A673 (cell line): ENCODE measurements at regions of chrX and their contacts with region 1.

Region 1: DNA sequence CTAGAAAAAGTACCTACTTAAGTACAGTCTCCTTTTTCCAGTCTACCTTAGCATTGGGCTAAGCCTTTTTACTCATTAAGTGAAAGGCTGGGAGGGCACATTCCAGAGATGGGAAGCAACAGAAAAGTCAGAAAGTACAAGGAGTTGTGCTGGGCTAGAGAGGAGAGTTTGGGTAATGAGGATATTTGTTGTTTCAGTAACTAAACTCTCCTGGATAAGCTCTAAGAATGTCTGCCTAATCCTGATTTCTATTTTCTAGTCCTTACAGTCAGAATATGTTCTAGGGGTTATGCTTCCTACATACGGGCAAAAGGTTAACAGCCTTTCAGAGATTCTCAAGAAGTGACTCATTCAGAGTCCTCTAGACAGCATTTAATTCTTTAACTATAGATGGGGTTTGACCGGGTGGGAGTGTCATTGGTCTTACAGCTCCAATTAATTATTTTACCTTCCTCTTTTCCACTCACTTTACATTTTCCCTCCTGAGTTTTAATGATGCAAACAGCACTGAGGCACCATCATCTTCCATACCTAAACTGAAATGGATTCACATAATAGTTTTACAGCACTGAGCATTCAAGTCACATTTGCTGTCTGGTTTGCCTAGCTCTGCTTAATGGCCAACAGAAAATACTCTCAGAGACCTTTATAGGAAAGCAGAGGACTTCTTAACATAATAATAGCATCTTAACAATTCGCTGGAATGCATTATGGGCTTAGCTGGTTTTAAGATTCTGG is 42.9 kb downstream of the USP26 start:
- DNase-seq: no peak
- H3K4me3 ChIP-seq: no peak overlapping the region
- H3K27ac ChIP-seq: no peak overlapping the region
- H3K4me1 ChIP-seq: no peaks in the 10 kb centered on the region
- H3K27me3 ChIP-seq: peaks cover 4% of the 10 kb centered on the region
- CTCF ChIP-seq: no peak

Region 2: DNA sequence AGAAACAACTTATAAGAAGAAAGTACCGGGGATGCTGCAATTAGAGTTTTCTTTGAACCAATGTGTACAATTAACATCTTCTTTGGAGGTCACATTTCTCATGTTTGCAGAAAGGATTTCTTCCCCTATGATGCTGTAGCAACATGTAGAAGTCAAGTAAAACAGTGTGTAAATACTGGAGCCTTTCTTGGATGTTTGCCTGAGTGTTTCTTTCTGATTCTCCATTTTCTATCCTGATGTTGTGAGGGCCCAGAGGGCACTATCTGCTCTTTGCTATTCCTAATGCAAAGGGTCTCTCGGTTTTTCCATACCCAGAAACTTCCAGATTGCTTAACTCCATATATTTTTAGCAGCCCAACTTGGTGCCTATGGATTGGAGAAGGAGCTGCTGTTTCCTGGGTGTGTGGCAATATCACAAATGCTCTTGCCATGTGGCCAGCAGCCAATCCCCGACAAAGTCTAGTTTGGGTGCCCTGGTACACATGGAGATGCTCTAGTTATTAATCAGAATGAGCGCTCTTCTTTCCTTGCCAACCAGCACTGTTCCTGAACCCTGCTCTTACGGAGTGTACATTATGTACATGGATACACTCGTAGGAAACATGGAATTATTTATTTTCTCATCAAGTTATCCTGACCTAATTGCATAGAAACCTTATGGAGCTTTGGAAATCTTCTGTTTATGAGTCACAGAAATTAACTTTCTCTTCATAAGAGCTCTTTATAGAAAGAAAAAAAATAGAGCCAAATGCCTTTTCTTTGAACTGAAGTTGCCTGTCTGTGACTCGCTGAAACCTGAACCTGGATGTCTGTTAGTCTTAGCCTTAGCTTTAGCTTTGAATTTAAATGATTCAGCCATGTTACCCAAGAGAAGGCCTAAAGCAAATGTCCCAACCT is 428.3 kb after region 1 on chrX:
- CTCF ChIA-PET with region 1: interaction called, 10 read pairs
- POLR2A ChIA-PET with region 1: no interaction called
- intact Hi-C with region 1: no loop called
- DNase-seq: no peak
- H3K4me3 ChIP-seq: no peak overlapping the region
- H3K27ac ChIP-seq: no peak overlapping the region
- H3K4me1 ChIP-seq: no peaks in the 10 kb centered on the region
- H3K27me3 ChIP-seq: no peaks in the 10 kb centered on the region
- CTCF ChIP-seq: no peak